ENCODE measurements at regions of chr14 and their contacts with region 1.

Region 1: GRCh38 chr14:69460093-69460701 is 24.3 kb upstream of the PLEKHD1 start:
- DNase-seq: peak; percentile 25
- ATAC-seq: peak; percentile 96
- H3K4me3 ChIP-seq: no peak overlapping the region
- H3K27ac ChIP-seq: no peak overlapping the region
- H3K4me1 ChIP-seq: no peaks in the 10 kb centered on the region
- H3K27me3 ChIP-seq: no peaks in the 10 kb centered on the region
- CTCF ChIP-seq: peak; percentile 69 to 91 (median 81); a peak in 5 of 6 replicates
- EP300 ChIP-seq: no peak
- POLR2A ChIP-seq: no peak
- RAD21 ChIP-seq: peak; percentile 92

Region 2: GRCh38 chr14:69242311-69243224 is 217.6 kb before region 1 on chr14:
- CTCF ChIA-PET with region 1: interaction called, 126 read pairs
- POLR2A ChIA-PET with region 1: no interaction called
- RAD21 ChIA-PET with region 1: interaction called, 55 read pairs
- SMC1A ChIA-PET with region 1: interaction called, 62 read pairs
- in situ Hi-C with region 1: no loop called
- intact Hi-C with region 1: loop called (anchors 1 kb)
- DNase-seq: peak; percentile 13
- ATAC-seq: peak; percentile 89
- H3K4me3 ChIP-seq: no peak overlapping the region
- H3K27ac ChIP-seq: no peak overlapping the region
- H3K4me1 ChIP-seq: no peaks in the 10 kb centered on the region
- H3K27me3 ChIP-seq: no peaks in the 10 kb centered on the region
- CTCF ChIP-seq: peak; percentile 62 to 77 (median 69)
- EP300 ChIP-seq: no peak
- POLR2A ChIP-seq: no peak
- RAD21 ChIP-seq: peak; percentile 69

Region 3: GRCh38 chr14:69299286-69300035 is 160.7 kb before region 1 on chr14:
- CTCF ChIA-PET with region 1: interaction called, 5 read pairs
- POLR2A ChIA-PET with region 1: no interaction called
- RAD21 ChIA-PET with region 1: no interaction called
- SMC1A ChIA-PET with region 1: interaction called, 10 read pairs
- in situ Hi-C with region 1: no loop called
- intact Hi-C with region 1: no loop called
- DNase-seq: no peak
- ATAC-seq: peak; percentile 87
- H3K4me3 ChIP-seq: no peak overlapping the region
- H3K27ac ChIP-seq: no peak overlapping the region
- H3K4me1 ChIP-seq: no peaks in the 10 kb centered on the region
- H3K27me3 ChIP-seq: peaks cover 0 to 4% of the 10 kb centered on the region in 2 experiments; a peak in 2 of 4 replicates
- CTCF ChIP-seq: peak; percentile 18 to 52 (median 43); a peak in 4 of 6 replicates
- EP300 ChIP-seq: no peak
- POLR2A ChIP-seq: no peak
- RAD21 ChIP-seq: peak; percentile 45

Region 4: GRCh38 chr14:69363055-69363454 is 97.1 kb before region 1 on chr14:
- CTCF ChIA-PET with region 1: interaction called, 15 read pairs
- POLR2A ChIA-PET with region 1: interaction called, 3 read pairs
- RAD21 ChIA-PET with region 1: interaction called, 10 read pairs
- SMC1A ChIA-PET with region 1: interaction called, 9 read pairs
- in situ Hi-C with region 1: no loop called
- intact Hi-C with region 1: loop called (anchors 5 kb)
- DNase-seq: no peak
- ATAC-seq: no peak
- H3K4me3 ChIP-seq: no peak overlapping the region
- H3K27ac ChIP-seq: no peak overlapping the region
- H3K4me1 ChIP-seq: peaks cover 13% of the 10 kb centered on the region
- H3K27me3 ChIP-seq: no peaks in the 10 kb centered on the region
- CTCF ChIP-seq: peak in 2 of 3 experiments; percentile 18 to 19; a peak in 1 of 6 replicates
- EP300 ChIP-seq: no peak
- POLR2A ChIP-seq: no peak
- RAD21 ChIP-seq: peak; percentile 50

Region 5: GRCh38 chr14:69441948-69442347 is 18.2 kb before region 1 on chr14:
- CTCF ChIA-PET with region 1: interaction called, 15 read pairs
- POLR2A ChIA-PET with region 1: interaction called, 3 read pairs
- RAD21 ChIA-PET with region 1: interaction called, 11 read pairs
- SMC1A ChIA-PET with region 1: interaction called, 22 read pairs
- in situ Hi-C with region 1: no loop called
- intact Hi-C with region 1: no loop called
- DNase-seq: peak; percentile 58
- ATAC-seq: peak; percentile 95
- H3K4me3 ChIP-seq: no peak overlapping the region
- H3K27ac ChIP-seq: peak overlapping the region; percentile 65
- H3K4me1 ChIP-seq: peaks cover 4% of the 10 kb centered on the region; the same call in 1 of the 2 replicates
- H3K27me3 ChIP-seq: no peaks in the 10 kb centered on the region
- CTCF ChIP-seq: no peak
- EP300 ChIP-seq: no peak
- POLR2A ChIP-seq: peak; percentile 57
- RAD21 ChIP-seq: no peak

Measured in GM12878 (cell line).